ENCODE measurements at regions of chr10 and their contacts with region 1.

Region 1: DNA sequence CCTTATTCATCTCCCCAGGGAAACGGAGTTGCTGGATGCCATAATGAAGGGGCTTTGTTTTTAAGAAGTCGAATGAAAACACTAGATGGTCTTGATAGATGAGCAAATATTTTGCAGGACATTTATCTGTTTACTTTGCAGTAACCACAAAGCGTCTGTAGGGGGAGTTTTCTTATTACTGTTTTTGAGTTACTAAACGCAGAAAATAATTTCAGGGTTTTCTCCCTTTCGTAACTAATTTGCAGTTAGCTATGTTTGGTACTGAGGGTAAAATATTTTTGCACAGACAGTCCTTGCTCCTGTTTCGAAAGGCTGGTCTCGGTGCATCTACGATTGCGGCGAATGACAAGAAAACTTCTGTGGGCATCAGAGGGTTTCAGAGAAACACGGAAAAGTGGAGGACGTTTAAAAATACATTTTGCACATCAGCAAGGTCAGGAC is 505.6 kb upstream of the MKI67 start:
- DNase-seq: no peak
- H3K4me3 ChIP-seq: no peak overlapping the region
- H3K27ac ChIP-seq: no peak overlapping the region
- H3K4me1 ChIP-seq: peaks cover 0 to 2% (median 0%) of the 10 kb centered on the region in 4 experiments; a peak in 3 of 7 replicates
- H3K27me3 ChIP-seq: no peaks in the 10 kb centered on the region
- CTCF ChIP-seq: peak in 2 of 3 experiments; percentile 20 to 47; a peak in 2 of 4 replicates
- EP300 ChIP-seq: no peak
- POLR2A ChIP-seq: no peak
- RAD21 ChIP-seq: peak; percentile 29 to 37; a peak in 3 of 4 replicates

Region 2: DNA sequence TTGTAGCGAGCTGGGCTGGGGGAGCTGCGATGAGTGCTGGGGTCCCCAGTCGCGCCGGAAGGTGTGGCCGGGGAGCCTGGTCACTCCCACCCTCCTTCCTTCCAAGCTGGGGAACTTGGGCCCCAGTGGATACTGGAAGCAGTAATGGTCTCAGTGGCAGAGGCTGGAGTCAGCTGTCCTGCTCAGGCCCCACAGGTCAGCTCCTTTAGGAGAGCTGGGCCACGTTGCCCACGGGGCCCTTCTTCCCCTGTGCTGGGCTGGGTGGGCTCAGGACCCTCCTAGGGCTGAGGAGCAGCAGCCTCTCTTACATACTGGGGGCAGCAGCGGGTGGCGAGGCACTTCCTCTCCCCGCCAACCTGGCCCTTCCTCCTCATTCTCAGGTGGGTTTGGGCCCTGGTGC is 305.0 kb before region 1 on chr10:
- CTCF ChIA-PET with region 1: no interaction called
- POLR2A ChIA-PET with region 1: no interaction called
- DNase-seq: no peak
- H3K4me3 ChIP-seq: no peak overlapping the region
- H3K27ac ChIP-seq: no peak overlapping the region
- H3K4me1 ChIP-seq: no peaks in the 10 kb centered on the region
- H3K27me3 ChIP-seq: no peaks in the 10 kb centered on the region
- CTCF ChIP-seq: no peak
- EP300 ChIP-seq: no peak
- POLR2A ChIP-seq: no peak
- RAD21 ChIP-seq: no peak

Region 3: GRCh38 chr10:128579280-128579865 is 52.4 kb before region 1 on chr10:
- CTCF ChIA-PET with region 1: no interaction called
- POLR2A ChIA-PET with region 1: no interaction called
- DNase-seq: no peak
- H3K4me3 ChIP-seq: no peak overlapping the region
- H3K27ac ChIP-seq: no peak overlapping the region
- H3K4me1 ChIP-seq: peaks cover 0 to 10% (median 4%) of the 10 kb centered on the region in 4 experiments; a peak in 5 of 7 replicates
- H3K27me3 ChIP-seq: peaks cover 0 to 3% (median 1%) of the 10 kb centered on the region in 4 experiments; a peak in 3 of 7 replicates
- CTCF ChIP-seq: no peak
- EP300 ChIP-seq: no peak
- POLR2A ChIP-seq: no peak
- RAD21 ChIP-seq: no peak

Region 4: DNA sequence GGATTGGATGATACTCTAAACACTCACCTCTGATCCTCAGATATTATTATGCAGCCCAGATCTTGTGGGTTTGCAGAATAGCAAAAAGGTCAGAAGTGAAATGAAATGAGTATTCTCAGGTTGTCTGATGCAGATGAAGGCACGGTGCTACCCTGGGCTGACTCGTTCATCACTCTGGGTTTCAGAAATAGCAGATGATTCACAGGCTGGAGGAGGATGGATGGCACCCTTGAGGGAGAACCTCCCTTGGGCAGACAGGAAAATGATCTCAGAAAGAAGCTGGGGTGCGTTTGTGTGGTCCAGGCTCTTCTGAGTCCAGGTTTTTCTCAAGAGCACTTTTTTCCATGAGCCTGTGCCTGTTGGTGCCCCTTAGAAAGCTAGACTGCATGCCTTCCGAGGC is 10.2 kb after region 1 on chr10:
- CTCF ChIA-PET with region 1: interaction called, 20 read pairs
- POLR2A ChIA-PET with region 1: no interaction called
- DNase-seq: no peak
- H3K4me3 ChIP-seq: no peak overlapping the region
- H3K27ac ChIP-seq: no peak overlapping the region
- H3K4me1 ChIP-seq: no peaks in the 10 kb centered on the region
- H3K27me3 ChIP-seq: no peaks in the 10 kb centered on the region
- CTCF ChIP-seq: no peak
- EP300 ChIP-seq: no peak
- POLR2A ChIP-seq: no peak
- RAD21 ChIP-seq: no peak

Region 5: DNA sequence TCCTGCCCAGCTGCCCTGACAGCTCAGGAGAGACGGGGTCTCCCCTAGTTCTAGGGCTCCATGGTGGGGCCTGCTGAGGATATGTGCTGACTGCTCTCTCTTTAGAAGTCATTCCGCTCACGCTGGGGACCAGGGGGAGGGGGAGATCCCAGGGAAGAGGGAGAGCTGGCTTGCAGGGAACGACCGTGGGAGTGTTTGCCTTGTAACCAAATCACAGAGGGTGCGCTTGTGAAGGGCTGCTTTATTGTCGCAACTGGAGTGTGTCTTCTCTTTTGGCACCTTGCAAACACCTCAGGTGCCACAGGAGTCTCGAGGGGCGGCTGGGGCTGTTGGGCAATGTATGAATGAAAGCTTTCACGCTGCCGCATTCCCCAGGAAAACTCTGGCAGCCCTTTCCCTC is 25.7 kb after region 1 on chr10:
- CTCF ChIA-PET with region 1: interaction called, 10 read pairs
- POLR2A ChIA-PET with region 1: no interaction called
- DNase-seq: no peak
- H3K4me3 ChIP-seq: no peak overlapping the region
- H3K27ac ChIP-seq: no peak overlapping the region
- H3K4me1 ChIP-seq: no peaks in the 10 kb centered on the region; a peak in 1 of 7 replicates
- H3K27me3 ChIP-seq: no peaks in the 10 kb centered on the region
- CTCF ChIP-seq: no peak
- EP300 ChIP-seq: no peak
- POLR2A ChIP-seq: no peak
- RAD21 ChIP-seq: no peak